ENCODE measurements at regions of chr15 and their contacts with region 1.

Region 1: DNA sequence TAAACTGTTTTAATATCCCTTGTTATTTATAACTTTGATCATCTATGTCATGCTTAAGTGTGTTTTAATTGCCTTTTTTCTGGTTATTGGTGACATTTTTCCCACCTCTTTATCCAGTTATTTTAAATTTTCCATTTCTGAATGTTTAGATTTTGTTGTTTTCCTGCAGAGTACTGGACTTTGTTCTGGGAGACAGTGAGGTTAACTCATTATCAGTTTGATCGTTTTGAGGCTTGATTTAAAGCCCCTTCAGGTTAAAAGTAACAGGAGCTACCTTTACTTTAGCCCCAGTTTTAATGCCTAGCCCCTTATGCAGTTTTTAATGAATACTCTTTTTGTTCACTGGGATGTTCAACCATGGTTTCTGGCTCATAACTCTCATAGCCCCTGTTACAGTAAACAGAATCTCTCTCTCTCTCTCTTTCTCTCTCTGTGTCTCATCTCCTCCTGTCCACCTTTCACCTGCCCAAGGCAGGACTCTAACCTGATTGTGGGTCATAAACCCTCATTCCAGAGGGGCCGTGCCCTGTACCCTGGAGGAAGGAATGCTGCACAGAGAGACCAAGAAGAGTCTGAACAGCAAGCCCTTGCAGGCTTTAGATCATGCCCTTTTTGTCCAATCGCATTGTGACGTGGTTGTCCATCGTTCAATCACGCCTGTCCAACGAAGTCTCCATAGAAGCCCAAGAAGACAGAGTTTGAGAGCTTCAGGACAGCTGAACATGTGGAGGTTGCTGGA is 91.8 kb upstream of the WDR72 start:
- DNase-seq: no peak

Region 2: GRCh38 chr15:53791581-53791980 is 59.7 kb before region 1 on chr15:
- intact Hi-C with region 1: no loop called
- DNase-seq: no peak

Region 3: GRCh38 chr15:53936137-53936536 is 84.9 kb after region 1 on chr15:
- intact Hi-C with region 1: no loop called
- DNase-seq: no peak

Region 4: DNA sequence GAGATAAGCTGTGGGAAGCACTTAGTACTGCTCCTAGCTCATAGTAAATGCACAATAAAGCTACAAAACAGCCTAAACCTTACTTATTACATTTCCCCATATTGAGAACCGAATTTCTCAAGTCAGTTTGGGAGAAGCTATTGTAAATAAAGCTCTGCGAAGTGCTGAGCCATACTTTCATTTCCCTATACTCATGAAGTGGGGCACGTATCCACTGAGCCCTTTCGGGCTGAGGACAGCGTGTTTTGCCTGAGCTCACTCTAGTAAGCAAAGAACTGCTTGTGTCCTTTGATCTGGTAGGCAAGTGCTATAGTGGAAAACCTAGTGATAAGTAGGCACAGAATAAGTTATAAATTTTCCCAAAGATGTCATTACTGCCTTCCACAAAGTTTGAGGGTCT is 1180.4 kb after region 1 on chr15:
- intact Hi-C with region 1: loop called in 1 of 2 experiments (anchors 10 kb)
- DNase-seq: no peak